Endothelial cell of umbilical vein (primary cell): ENCODE measurements at regions of chr15 and their contacts with region 1.

Region 1: DNA sequence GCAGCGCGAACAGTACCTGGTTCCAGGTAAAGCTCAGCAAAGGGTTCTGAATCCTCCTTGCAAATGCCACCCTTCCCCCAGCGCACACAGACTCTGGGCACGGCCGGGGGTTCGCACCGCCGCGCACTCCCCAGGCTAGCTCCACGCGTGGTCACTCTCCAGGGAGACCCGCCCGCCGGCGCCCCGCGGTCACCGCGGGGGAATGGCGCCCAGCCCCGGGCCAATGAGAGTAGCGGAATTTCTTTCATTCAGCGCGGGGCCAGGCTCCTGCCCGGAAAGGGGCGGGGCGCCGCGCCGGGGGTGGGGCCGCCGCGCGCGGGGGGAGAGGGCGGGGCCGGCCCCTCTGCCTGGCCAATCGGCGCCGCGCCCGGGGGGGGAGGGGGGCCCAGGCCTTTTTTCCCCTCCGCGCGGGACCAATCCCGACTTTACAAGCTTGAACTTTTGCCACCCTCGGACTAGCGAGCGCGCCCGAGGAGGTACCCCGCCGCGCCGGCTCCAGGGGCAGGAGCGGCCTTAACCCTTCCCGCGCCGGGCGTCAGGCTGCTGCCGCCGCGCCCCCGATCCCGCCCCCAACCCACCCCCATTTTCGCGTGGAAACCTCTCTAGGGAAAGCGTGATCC is 1.1 kb upstream of the SMAD6 start:
- DNase-seq: peak; percentile 94
- H3K4me3 ChIP-seq: peak overlapping the region; percentile 8 to 79 (median 46)
- H3K27ac ChIP-seq: peak overlapping the region; percentile 92
- H3K4me1 ChIP-seq: peaks cover 28% of the 10 kb centered on the region
- H3K27me3 ChIP-seq: no peaks in the 10 kb centered on the region
- CTCF ChIP-seq: no peak
- POLR2A ChIP-seq: peak; percentile 48

Region 2: GRCh38 chr15:66504563-66505429 is 196.1 kb before region 1 on chr15 and contains the starts of genes RPL4 and ZWILCH:
- CTCF ChIA-PET with region 1: no interaction called
- POLR2A ChIA-PET with region 1: no interaction called
- dilution Hi-C with region 1: no loop called
- intact Hi-C with region 1: loop called (anchors 2 kb)
- DNase-seq: peak; percentile 86
- H3K4me3 ChIP-seq: peak within 1 kb of the TSS; percentile 93 to 98 (median 98)
- H3K27ac ChIP-seq: peak within 1 kb of the TSS; percentile 96
- H3K4me1 ChIP-seq: peaks cover 28% of the 10 kb centered on the region
- H3K27me3 ChIP-seq: no peaks in the 10 kb centered on the region
- CTCF ChIP-seq: no peak
- POLR2A ChIP-seq: peak; percentile 79
- total RNA-seq, gene RPL4: 2,534 and 2,598 TPM in 2 replicates
- total RNA-seq, gene ZWILCH: 28.8 and 29.8 TPM in 2 replicates

Region 3: DNA sequence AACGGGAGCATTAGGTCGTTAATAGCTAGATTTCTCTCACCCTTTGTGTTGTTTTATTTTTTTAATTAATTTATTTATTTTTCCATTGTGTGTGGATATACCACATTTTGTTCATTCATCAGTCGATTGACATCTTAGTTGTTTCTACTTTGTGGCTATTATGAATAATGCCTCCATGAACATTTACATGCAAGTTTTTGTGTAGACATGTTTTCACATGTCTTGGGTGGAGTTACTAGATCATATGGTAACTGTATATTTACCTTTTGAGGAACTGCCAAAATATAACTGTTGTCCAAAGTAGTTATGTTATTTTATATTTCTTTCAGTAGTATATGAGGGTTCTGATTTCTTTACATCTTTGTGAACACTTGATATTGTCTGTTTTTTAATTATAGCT is 177.0 kb before region 1 on chr15:
- CTCF ChIA-PET with region 1: no interaction called
- POLR2A ChIA-PET with region 1: no interaction called
- dilution Hi-C with region 1: no loop called
- intact Hi-C with region 1: no loop called
- DNase-seq: no peak
- H3K4me3 ChIP-seq: no peak overlapping the region
- H3K27ac ChIP-seq: no peak overlapping the region
- H3K4me1 ChIP-seq: no peaks in the 10 kb centered on the region
- H3K27me3 ChIP-seq: no peaks in the 10 kb centered on the region
- CTCF ChIP-seq: no peak
- POLR2A ChIP-seq: no peak

Region 4: DNA sequence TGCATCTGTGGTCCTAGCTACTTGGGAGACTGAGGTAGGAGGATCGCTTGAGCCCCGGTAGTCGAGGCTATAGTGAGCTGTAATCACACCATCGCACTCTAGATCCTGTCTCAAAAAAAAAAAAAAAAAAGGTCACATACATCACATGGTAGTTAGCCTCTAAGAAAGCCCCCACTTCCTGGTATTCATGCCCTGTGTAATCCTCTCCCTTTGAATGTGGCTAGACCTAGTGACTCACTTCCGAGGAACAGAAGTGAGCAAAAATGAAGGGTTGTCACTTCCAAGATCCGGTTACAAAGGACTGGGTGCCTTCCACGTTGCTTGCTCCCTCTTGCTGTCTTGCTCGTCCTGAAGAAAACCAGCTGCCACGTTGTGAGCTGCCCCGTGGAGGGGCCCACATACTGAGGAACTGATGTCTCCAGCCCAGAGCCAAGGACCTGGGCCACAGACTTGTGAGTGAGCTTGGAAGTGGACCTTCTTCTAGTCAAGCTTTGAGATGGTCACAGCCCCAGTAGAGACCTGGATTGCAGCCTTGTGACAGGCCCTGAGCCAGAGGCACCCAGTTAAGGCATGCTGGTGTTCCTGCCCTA is 122.5 kb before region 1 on chr15:
- CTCF ChIA-PET with region 1: no interaction called
- POLR2A ChIA-PET with region 1: no interaction called
- dilution Hi-C with region 1: no loop called
- intact Hi-C with region 1: no loop called
- DNase-seq: peak; percentile 69
- H3K4me3 ChIP-seq: no peak overlapping the region
- H3K27ac ChIP-seq: peak overlapping the region; percentile 56
- H3K4me1 ChIP-seq: peaks cover 34% of the 10 kb centered on the region
- H3K27me3 ChIP-seq: no peaks in the 10 kb centered on the region
- CTCF ChIP-seq: no peak
- POLR2A ChIP-seq: no peak

Region 5: GRCh38 chr15:66650434-66650833 is 50.5 kb before region 1 on chr15:
- CTCF ChIA-PET with region 1: interaction called, 8 read pairs
- POLR2A ChIA-PET with region 1: no interaction called
- dilution Hi-C with region 1: no loop called
- intact Hi-C with region 1: loop called (anchors 2 kb)
- DNase-seq: peak; percentile 87
- H3K4me3 ChIP-seq: no peak overlapping the region
- H3K27ac ChIP-seq: peak overlapping the region; percentile 71
- H3K4me1 ChIP-seq: peaks cover 34% of the 10 kb centered on the region
- H3K27me3 ChIP-seq: no peaks in the 10 kb centered on the region
- CTCF ChIP-seq: no peak
- POLR2A ChIP-seq: no peak

Region 6: GRCh38 chr15:66720206-66721006 is 19.5 kb after region 1 on chr15:
- CTCF ChIA-PET with region 1: interaction called, 14 read pairs
- POLR2A ChIA-PET with region 1: no interaction called
- dilution Hi-C with region 1: no loop called
- intact Hi-C with region 1: no loop called
- DNase-seq: peak; percentile 56
- H3K4me3 ChIP-seq: no peak overlapping the region
- H3K27ac ChIP-seq: peak overlapping the region; percentile 11
- H3K4me1 ChIP-seq: peaks cover 53% of the 10 kb centered on the region
- H3K27me3 ChIP-seq: no peaks in the 10 kb centered on the region
- CTCF ChIP-seq: no peak
- POLR2A ChIP-seq: no peak

Region 7: GRCh38 chr15:66774001-66774814 is 73.3 kb after region 1 on chr15:
- CTCF ChIA-PET with region 1: interaction called, 118 read pairs
- POLR2A ChIA-PET with region 1: no interaction called
- dilution Hi-C with region 1: no loop called
- intact Hi-C with region 1: loop called (anchors 1 kb)
- DNase-seq: peak; percentile 80
- H3K4me3 ChIP-seq: no peak overlapping the region
- H3K27ac ChIP-seq: peak overlapping the region; percentile 25
- H3K4me1 ChIP-seq: peaks cover 21% of the 10 kb centered on the region
- H3K27me3 ChIP-seq: no peaks in the 10 kb centered on the region
- CTCF ChIP-seq: peak; percentile 92 to 96
- POLR2A ChIP-seq: no peak

Region 8: DNA sequence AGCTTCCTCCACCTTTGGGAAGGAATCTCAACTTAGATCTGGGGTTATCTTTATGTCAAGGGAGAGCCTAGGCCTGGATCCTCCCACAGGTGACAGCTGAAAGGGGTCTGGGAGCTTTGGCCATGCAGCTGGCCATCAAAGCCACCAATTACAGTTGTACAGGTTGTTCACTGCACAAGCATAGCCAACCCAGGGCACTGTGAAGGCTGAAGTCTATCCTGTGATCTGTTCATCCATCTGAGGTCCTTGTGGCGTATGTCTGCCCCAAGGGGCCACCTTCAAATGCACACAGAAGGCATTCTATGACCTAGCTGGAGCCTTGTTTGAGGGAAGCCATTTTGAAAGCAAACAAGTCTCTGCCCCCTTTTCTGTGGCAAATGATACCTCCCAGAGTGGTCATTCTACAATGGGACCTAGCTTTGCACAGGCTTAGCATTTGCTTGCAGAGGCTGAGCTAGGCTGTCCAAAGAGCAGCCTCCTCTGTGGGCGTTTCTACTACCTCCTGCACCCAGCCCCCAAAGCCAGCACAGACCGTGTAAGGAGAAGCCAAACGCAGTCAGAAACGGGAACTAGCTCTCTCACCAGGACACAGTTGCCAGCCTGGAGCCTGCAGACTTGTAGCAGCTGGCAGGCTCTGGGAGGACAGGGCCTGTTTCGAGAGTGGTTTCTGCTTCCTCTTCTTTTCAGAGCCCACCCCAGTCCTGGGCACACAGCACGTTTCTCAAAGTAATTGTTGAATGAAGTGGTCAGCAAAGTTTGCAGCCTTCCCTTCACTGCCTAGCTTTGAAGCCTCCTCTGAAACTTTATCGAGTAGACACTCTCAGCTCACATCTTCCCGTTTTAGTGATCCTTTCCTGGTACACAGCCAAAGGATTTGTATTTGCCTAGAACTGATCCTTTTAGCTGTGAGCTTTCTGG is 207.2 kb after region 1 on chr15:
- CTCF ChIA-PET with region 1: no interaction called
- POLR2A ChIA-PET with region 1: no interaction called
- dilution Hi-C with region 1: no loop called
- intact Hi-C with region 1: no loop called
- DNase-seq: no peak
- H3K4me3 ChIP-seq: no peak overlapping the region
- H3K27ac ChIP-seq: no peak overlapping the region
- H3K4me1 ChIP-seq: no peaks in the 10 kb centered on the region
- H3K27me3 ChIP-seq: peaks cover 0 to 7% of the 10 kb centered on the region in 2 experiments
- CTCF ChIP-seq: no peak
- POLR2A ChIP-seq: no peak